Posterior vena cava (tissue), 2 donors: ENCODE measurements at regions of chr1 and their contacts with region 1.

Region 1: GRCh38 chr1:221987860-221988520 is 246.1 kb upstream of the DUSP10 start:
- DNase-seq: no peak

Region 2: DNA sequence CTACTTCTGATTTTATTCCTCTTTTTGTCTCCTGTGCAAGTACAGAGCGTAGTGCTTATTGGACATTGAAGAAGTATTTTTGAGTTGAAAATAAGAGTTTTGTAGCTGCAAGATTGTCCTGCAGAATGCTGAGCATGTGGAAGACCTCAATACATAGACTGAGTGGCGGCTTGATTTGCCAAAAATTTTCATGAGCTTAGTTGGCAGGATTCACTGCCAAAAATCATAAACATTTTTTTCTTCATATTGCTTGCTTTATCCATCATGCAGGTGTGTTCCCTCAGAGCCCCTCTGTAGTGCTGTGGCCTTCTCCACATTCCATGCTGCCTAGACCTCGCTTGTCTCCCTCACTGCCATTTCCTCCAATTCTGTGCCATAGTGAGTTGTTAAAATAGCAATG is 346.2 kb before region 1 on chr1:
- intact Hi-C with region 1: loop called in 1 of 2 experiments (anchors 2 kb)
- DNase-seq: no peak

Region 3: DNA sequence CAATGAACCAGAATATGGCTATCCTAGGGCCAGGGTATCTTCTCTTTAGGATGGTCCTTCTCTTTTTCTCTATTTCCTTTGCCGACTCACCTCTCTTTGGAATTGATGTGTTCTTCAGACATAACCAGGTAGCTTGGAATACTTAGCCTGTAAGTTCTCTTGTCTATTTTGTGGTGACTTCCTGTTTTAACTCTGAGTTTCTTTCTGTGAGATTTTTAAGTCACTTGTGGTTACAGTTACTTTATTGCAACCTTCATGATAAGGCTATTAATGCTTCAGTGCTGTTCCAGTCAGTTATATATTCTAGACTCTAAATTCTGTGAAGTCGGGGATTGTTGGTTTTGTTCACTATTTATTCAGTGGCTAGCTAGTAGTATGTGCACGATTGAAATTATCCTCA is 873.1 kb after region 1 on chr1:
- intact Hi-C with region 1: loop called in 1 of 2 experiments (anchors 10 kb)
- DNase-seq: no peak